Sciatic nerve (tissue), 2 donors: ENCODE measurements at regions of chr6 and their contacts with region 1.

Region 1: GRCh38 chr6:23890543-23891227 is 235.3 kb upstream of the NRSN1 start:
- DNase-seq: no peak
- ATAC-seq: no peak

Region 2: DNA sequence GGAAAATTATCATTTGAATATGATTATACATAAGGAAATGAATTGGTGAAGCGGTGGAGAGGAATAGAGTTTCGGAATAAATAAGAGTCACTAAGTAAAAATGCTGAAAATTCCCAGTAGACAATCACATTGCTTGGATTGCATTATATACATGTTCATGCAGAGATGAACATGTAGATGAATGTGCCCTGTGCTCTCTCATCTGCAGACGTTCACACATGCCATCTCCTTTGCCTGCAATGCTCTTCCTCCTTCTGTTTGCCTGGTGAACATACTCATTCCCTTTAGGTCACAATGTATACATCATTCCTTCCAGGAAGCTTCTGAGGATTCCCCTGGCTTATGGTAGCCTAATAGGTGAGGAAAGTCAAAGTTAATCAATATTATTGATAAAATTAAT is 449.2 kb after region 1 on chr6:
- intact Hi-C with region 1: loop called (anchors 5 kb)
- DNase-seq: no peak
- ATAC-seq: no peak